MCF 10A (cell line): ENCODE measurements at regions of chrX and their contacts with region 1.

Region 1: DNA sequence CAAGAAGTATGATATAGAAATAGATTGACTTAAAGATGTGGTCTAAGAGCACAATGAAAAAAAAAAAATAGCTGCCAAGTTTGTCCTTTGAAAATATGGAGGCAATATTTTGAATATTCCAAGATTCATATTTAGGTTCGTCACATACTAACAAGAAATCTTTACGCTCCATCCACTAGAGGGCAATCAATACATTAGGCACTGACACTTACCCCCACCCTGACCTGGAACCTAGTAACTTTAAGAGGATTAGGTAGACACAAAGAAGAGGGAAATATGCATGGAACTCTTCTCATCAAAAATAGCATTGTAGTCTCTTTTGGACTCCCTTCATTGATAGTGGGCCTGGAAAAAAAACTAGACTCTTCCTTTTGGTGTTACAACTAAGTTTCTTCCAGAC is 1108.1 kb downstream of the PCDH19 start:
- DNase-seq: peak; percentile 53
- H3K4me3 Mint-ChIP-seq: no peak overlapping the region
- H3K27ac Mint-ChIP-seq: no peak overlapping the region
- H3K4me1 Mint-ChIP-seq: no peaks in the 10 kb centered on the region
- H3K27me3 Mint-ChIP-seq: peaks cover 30% of the 10 kb centered on the region
- CTCF ChIP-seq: peak; percentile 46

Region 2: GRCh38 chrX:99469439-99469838 is 167.4 kb after region 1 on chrX:
- CTCF ChIA-PET with region 1: no interaction called
- POLR2A ChIA-PET with region 1: no interaction called
- intact Hi-C with region 1: no loop called
- DNase-seq: no peak
- H3K4me3 Mint-ChIP-seq: no peak overlapping the region
- H3K27ac Mint-ChIP-seq: no peak overlapping the region
- H3K4me1 Mint-ChIP-seq: no peaks in the 10 kb centered on the region
- H3K27me3 Mint-ChIP-seq: peaks cover 14% of the 10 kb centered on the region
- CTCF ChIP-seq: no peak

Region 3: GRCh38 chrX:99857455-99857854 is 555.5 kb after region 1 on chrX:
- CTCF ChIA-PET with region 1: no interaction called
- POLR2A ChIA-PET with region 1: no interaction called
- intact Hi-C with region 1: loop called (anchors 5 kb)
- DNase-seq: peak; percentile 29
- H3K4me3 Mint-ChIP-seq: no peak overlapping the region
- H3K27ac Mint-ChIP-seq: no peak overlapping the region
- H3K4me1 Mint-ChIP-seq: no peaks in the 10 kb centered on the region
- H3K27me3 Mint-ChIP-seq: peaks cover 44% of the 10 kb centered on the region
- CTCF ChIP-seq: peak; percentile 28

Region 4: DNA sequence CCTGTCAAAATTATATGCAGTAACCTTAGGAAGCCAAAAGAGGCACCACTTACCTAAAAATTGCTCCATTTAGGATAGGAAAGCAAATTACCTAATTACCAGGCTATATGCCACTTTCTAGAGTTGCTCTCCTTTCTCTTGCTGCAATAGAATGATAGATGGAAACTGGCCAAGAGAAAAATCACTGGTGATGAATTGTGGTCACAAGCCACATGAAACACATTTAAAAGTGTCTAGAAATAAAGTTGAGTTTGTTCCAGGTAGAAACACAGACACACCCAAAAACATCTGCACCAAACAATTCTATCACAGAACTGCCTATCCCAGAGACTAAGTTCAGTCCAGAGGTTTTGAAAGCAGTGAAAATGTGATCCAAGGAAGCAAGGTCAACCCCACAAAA is 770.3 kb after region 1 on chrX:
- CTCF ChIA-PET with region 1: no interaction called
- POLR2A ChIA-PET with region 1: interaction called, 3 read pairs
- intact Hi-C with region 1: loop called (anchors 5 kb)
- DNase-seq: peak; percentile 26
- H3K4me3 Mint-ChIP-seq: no peak overlapping the region
- H3K27ac Mint-ChIP-seq: no peak overlapping the region
- H3K4me1 Mint-ChIP-seq: no peaks in the 10 kb centered on the region
- H3K27me3 Mint-ChIP-seq: peaks cover 11% of the 10 kb centered on the region
- CTCF ChIP-seq: peak; percentile 15

Region 5: DNA sequence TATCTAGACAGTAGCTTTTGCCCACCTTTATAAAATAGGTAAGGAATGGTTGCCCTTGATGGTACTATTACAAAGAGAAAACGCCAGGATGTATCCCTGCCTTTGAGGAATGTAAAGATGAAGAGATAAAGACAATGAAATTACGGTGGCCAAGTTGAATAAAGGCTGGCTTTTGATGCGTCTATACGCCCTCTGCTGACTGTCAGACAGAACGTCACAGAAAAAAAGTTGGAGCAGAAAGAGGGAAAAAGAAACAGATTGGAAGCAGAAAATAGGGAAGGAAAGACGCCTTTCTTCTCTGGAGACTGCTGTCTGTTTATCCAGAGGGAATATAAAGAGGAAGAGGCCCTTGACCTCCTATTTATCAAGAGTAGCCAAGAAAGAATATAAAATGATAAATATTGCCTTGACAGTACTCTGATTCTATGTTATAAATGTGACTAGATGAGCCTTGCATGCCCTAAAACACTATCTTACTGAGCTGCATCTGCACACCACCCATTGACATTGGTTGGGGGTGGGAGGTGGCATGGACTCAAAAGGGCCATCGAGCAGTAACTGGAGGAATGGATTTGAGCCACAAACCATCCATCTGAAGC is 1077.5 kb after region 1 on chrX:
- CTCF ChIA-PET with region 1: interaction called, 4 read pairs
- POLR2A ChIA-PET with region 1: no interaction called
- intact Hi-C with region 1: loop called (anchors 1 kb)
- DNase-seq: peak; percentile 62
- H3K4me3 Mint-ChIP-seq: no peak overlapping the region
- H3K27ac Mint-ChIP-seq: peak overlapping the region; percentile 3
- H3K4me1 Mint-ChIP-seq: peaks cover 19% of the 10 kb centered on the region
- H3K27me3 Mint-ChIP-seq: peaks cover 45% of the 10 kb centered on the region
- CTCF ChIP-seq: peak; percentile 56